GM12878 (cell line): ENCODE measurements at regions of chr10 and their contacts with region 1.

Region 1: DNA sequence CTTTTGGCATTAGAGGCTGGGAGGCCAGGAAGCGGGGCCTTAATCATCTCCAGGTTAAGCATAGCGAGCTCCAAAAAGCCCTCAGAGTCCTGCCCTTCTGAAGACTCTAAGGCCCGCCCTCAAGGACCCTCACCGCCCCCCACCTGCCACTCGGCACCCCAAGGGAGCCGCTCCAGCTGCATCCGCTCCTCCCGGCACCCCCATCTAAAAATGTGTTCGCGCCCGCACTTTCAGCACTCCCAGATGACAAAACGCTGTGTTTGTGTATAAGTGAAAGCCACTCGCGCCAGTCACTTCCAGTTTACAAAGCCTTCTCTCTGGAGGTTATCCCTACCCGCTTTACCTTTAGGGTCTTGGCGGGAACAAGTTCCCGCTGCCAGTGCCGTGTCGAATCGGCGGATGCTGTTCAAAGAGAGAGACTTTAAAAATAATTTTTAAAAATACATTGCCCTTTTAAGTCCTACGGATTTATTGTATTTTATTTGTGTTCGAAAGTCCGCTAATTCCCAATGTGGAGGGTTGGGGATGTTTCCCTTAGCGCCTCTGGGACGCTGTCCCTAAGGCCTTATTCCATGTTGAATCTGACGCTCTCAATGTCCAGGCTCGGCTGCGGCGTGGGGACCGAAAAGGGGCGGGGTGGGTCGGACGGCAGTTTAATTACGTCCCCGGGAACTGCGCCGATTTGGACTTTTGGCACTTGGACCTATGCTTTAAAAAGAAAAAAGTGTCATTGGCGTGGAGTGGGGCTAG is at the starts of genes DCLRE1A and NHLRC2:
- DNase-seq: no peak
- ATAC-seq: peak; percentile 55
- H3K4me3 ChIP-seq: peak within 1 kb of the TSS; percentile 78
- H3K27ac ChIP-seq: peak within 1 kb of the TSS; percentile 92
- H3K4me1 ChIP-seq: peaks cover 4% of the 10 kb centered on the region; the same call in 1 of the 2 replicates
- H3K27me3 ChIP-seq: no peaks in the 10 kb centered on the region
- CTCF ChIP-seq: no peak
- EP300 ChIP-seq: peak in 1 of 2 experiments; percentile 99; a peak in 2 of 4 replicates
- POLR2A ChIP-seq: no peak
- RAD21 ChIP-seq: no peak
- polyA plus RNA-seq, gene DCLRE1A: 4.8 to 5.2 TPM
- polyA plus RNA-seq, gene NHLRC2: 1.9 to 3.9 TPM

Region 2: GRCh38 chr10:112811740-112812551 is 1042.2 kb before region 1 on chr10:
- CTCF ChIA-PET with region 1: no interaction called
- POLR2A ChIA-PET with region 1: no interaction called
- RAD21 ChIA-PET with region 1: no interaction called
- SMC1A ChIA-PET with region 1: no interaction called
- in situ Hi-C with region 1: no loop called
- intact Hi-C with region 1: no loop called
- DNase-seq: no peak
- ATAC-seq: no peak
- H3K4me3 ChIP-seq: no peak overlapping the region
- H3K27ac ChIP-seq: no peak overlapping the region
- H3K4me1 ChIP-seq: no peaks in the 10 kb centered on the region
- H3K27me3 ChIP-seq: no peaks in the 10 kb centered on the region
- CTCF ChIP-seq: no peak
- EP300 ChIP-seq: no peak
- POLR2A ChIP-seq: no peak
- RAD21 ChIP-seq: no peak

Region 3: DNA sequence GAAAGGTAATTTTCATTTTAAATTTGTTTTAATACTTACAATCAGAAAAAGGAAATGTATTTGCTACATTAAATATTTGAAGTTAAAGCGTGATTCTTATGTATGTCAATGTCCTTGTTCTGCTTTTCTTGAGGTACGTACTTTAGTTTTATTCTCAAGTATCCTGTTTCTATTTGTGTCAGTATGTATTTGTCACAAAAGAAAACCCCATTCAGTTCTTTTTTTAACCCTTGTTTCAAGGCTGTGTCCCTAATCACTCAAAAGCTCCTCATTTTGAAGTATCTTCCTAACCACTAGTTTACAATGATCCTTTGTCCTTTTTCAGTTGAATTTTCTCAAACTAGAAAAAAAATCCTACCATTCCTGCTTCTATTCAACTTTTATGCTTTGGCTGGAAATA is 25.5 kb after region 1 on chr10:
- CTCF ChIA-PET with region 1: interaction called, 3 read pairs
- POLR2A ChIA-PET with region 1: interaction called, 4 read pairs
- RAD21 ChIA-PET with region 1: interaction called, 30 read pairs
- SMC1A ChIA-PET with region 1: interaction called, 11 read pairs
- in situ Hi-C with region 1: no loop called
- intact Hi-C with region 1: loop called (anchors 2 kb)
- DNase-seq: peak; percentile 48
- ATAC-seq: peak; percentile 90
- H3K4me3 ChIP-seq: peak overlapping the region; percentile 47
- H3K27ac ChIP-seq: peak overlapping the region; percentile 86
- H3K4me1 ChIP-seq: peaks cover 25% of the 10 kb centered on the region
- H3K27me3 ChIP-seq: no peaks in the 10 kb centered on the region
- CTCF ChIP-seq: no peak
- EP300 ChIP-seq: peak; percentile 73 to 77; a peak in 2 of 4 replicates
- POLR2A ChIP-seq: no peak
- RAD21 ChIP-seq: no peak

Region 4: DNA sequence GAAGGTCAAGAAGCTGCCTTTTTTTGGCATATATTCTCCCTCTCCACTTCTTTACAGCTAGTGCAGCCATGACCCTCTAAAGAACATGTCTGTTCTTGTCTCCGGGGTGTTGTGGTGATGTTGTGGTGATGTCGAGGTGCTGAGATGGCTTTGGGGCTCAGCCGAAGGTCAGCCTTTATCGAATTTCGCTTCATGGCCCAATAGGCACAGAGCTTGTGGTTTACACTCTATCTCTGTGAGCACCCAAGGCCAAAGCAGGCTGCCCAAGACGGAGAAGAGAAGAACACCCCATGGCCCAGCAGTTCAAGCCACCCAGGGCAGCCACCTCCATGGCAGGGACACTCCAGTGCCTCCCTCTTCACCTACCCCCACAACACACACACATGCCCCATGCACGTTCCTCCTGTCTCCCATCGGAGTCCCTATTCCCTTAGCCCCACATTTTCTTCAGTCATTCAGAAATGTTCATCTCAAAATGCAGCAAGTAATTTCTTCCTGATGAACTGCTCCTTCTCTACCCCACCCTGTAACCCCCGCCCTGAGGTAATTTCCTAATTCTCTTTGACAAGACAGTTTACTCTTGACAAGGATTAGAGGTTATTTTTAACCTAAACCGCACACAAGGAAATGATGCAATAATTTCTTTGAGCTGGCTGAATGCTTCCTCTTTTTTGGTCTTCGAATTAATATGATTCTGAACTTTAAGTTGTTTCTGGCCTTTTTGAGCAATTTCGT is 170.9 kb after region 1 on chr10:
- CTCF ChIA-PET with region 1: no interaction called
- POLR2A ChIA-PET with region 1: interaction called, 6 read pairs
- RAD21 ChIA-PET with region 1: interaction called, 12 read pairs
- SMC1A ChIA-PET with region 1: interaction called, 8 read pairs
- in situ Hi-C with region 1: no loop called
- intact Hi-C with region 1: loop called (anchors 2 kb)
- DNase-seq: peak; percentile 86
- ATAC-seq: peak; percentile 90
- H3K4me3 ChIP-seq: peak overlapping the region; percentile 51
- H3K27ac ChIP-seq: peak overlapping the region; percentile 86
- H3K4me1 ChIP-seq: peaks cover 25% of the 10 kb centered on the region
- H3K27me3 ChIP-seq: no peaks in the 10 kb centered on the region
- CTCF ChIP-seq: no peak
- EP300 ChIP-seq: peak; percentile 61 to 78
- POLR2A ChIP-seq: peak; percentile 73
- RAD21 ChIP-seq: peak; percentile 35; the same call in 1 of the 2 replicates